IMR-90 (cell line): ENCODE measurements at regions of chr2 and their contacts with region 1.

Region 1: DNA sequence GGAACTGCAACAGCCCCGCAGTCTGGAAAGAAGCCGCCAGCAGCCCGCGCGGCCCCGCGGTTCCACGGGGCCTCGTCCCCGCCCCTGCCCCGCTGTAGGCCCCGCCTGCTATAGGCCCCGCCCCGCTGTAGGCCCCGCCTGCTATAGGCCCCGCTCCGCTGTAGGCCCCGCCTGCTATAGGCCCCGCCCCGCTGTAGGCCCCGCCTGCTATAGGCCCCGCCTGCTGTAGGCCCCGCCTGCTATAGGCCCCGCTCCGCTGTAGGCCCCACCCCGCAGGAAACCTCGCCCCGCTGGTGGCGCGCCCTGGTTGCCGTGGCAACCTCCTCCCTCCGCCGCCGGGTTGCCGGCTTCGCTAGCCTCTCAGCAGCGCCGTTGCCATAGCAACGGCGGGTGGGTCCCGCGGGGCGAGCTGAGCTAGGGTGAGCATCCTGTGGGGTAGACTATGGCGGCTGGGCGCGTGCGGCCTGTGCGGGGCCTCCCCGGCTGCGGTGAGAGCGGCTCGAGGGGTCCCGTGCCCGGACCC is 12.2 kb upstream of the KIF1A start:
- DNase-seq: peak; percentile 82
- ATAC-seq: peak; percentile 86
- H3K4me3 ChIP-seq: peak overlapping the region; percentile 34; the same call in 1 of the 2 replicates
- H3K27ac ChIP-seq: no peak overlapping the region
- H3K4me1 ChIP-seq: peaks cover 8% of the 10 kb centered on the region; the same call in 1 of the 2 replicates
- H3K27me3 ChIP-seq: peaks cover 35% of the 10 kb centered on the region
- CTCF ChIP-seq: no peak
- POLR2A ChIP-seq: no peak
- RAD21 ChIP-seq: no peak

Region 2: DNA sequence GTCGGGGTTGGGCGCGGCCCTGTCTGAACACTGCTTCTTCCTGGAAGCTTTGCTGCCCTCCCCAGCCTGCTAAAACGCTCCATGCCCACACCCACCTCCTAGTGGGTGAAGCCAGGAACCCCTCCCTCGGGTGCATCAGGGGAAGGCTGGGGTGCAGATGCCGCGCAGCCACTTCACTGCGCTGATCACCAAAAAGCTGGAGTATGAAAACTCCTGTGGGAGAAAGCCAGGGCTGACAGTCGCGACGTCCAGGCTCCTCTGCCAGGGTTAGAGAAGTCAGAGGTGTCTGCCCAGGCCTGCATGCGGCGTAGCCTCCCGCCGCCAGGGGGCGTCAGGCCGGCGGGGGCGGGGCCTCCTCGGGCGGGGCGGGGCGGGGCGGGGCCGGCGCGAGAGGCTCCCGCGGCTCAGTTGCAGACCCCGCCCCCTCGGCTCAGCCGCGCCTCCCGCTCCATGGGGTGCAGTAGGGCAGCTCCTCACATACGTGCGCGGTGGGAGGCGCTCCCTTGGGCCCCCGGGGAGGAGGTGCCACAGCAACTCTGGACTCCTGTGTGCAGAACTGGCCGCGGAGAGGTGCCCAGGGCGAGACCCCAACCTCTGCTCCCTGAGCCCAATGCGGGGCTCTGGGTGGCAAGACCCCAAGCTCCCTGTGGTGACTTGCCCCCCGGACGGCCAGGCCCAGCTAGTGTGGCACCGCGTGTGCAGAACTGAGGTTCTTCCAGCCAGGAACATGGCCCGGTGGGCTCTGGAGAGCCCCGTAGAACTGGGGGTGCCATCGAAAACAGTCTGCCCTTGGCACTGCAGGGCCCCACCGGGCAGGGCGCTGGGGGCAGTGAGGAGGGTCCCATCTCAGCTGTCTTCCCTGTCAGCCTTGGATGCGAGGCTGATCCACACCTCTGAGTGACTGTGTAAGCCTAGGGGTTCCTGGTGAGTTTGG is 265.8 kb before region 1 on chr2:
- CTCF ChIA-PET with region 1: no interaction called
- POLR2A ChIA-PET with region 1: no interaction called
- dilution Hi-C with region 1: no loop called
- in situ Hi-C with region 1: no loop called
- intact Hi-C with region 1: loop called (anchors 2 kb)
- DNase-seq: peak; percentile 70
- ATAC-seq: peak; percentile 79
- H3K4me3 ChIP-seq: peak overlapping the region; percentile 31
- H3K27ac ChIP-seq: peak overlapping the region; percentile 72
- H3K4me1 ChIP-seq: peaks cover 36% of the 10 kb centered on the region
- H3K27me3 ChIP-seq: no peaks in the 10 kb centered on the region
- CTCF ChIP-seq: peak; percentile 66
- POLR2A ChIP-seq: no peak
- RAD21 ChIP-seq: peak; percentile 29; the same call in 1 of the 2 replicates

Region 3: GRCh38 chr2:240780023-240780700 is 52.1 kb before region 1 on chr2:
- CTCF ChIA-PET with region 1: no interaction called
- POLR2A ChIA-PET with region 1: no interaction called
- dilution Hi-C with region 1: no loop called
- in situ Hi-C with region 1: no loop called
- intact Hi-C with region 1: no loop called
- DNase-seq: no peak
- ATAC-seq: no peak
- H3K4me3 ChIP-seq: no peak overlapping the region
- H3K27ac ChIP-seq: no peak overlapping the region
- H3K4me1 ChIP-seq: no peaks in the 10 kb centered on the region
- H3K27me3 ChIP-seq: peaks cover 1% of the 10 kb centered on the region; the same call in 1 of the 2 replicates
- CTCF ChIP-seq: no peak
- POLR2A ChIP-seq: no peak
- RAD21 ChIP-seq: no peak